H1 (cell line): ENCODE measurements at regions of chr1 and their contacts with region 1.

Region 1: DNA sequence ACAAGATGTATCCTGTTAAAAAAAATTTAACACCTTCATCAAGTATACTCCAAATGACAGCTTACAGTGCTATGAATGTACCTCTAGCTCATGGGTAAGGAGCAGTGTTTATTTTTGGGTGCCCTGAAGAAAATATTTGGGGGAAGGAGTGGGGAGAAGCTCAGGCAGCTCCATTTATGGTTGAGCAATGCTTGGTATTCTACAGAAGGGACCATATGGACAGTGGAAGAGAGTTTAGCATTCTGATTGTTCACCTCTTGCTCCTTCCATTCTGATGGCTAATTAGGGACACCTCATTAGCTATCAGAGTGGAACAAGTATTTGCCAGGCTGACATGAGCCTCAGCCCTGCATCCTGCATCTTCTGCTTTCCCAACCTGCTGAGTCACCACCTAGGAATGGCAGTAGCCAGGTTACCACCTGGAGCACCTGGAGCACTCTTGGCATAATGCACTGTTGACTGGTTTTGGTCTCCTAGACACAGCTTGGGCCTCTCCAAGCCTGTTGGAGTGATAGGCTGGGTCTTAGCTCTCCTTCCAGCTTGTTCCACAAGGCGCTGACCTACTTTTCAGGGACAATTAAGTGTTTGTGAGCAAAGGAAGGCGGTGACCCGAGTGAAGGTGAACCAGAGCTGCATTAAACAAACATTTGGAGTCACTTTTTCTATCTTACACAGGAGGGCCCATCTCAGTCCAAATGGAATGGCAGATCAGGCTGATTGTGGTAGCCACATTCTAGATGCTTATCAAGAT is 61.9 kb upstream of the MACF1 start:
- DNase-seq: no peak
- H3K4me3 ChIP-seq: peak overlapping the region in 1 of 4 experiments; percentile 18; a peak in 1 of 8 replicates
- H3K27ac ChIP-seq: peak overlapping the region; percentile 71
- H3K4me1 ChIP-seq: peaks cover 6 to 23% (median 15%) of the 10 kb centered on the region in 4 experiments; a peak in 6 of 7 replicates
- H3K27me3 ChIP-seq: no peaks in the 10 kb centered on the region
- CTCF ChIP-seq: no peak
- EP300 ChIP-seq: no peak
- POLR2A ChIP-seq: peak in 1 of 2 experiments; percentile 48; a peak in 1 of 3 replicates
- RAD21 ChIP-seq: no peak

Region 2: DNA sequence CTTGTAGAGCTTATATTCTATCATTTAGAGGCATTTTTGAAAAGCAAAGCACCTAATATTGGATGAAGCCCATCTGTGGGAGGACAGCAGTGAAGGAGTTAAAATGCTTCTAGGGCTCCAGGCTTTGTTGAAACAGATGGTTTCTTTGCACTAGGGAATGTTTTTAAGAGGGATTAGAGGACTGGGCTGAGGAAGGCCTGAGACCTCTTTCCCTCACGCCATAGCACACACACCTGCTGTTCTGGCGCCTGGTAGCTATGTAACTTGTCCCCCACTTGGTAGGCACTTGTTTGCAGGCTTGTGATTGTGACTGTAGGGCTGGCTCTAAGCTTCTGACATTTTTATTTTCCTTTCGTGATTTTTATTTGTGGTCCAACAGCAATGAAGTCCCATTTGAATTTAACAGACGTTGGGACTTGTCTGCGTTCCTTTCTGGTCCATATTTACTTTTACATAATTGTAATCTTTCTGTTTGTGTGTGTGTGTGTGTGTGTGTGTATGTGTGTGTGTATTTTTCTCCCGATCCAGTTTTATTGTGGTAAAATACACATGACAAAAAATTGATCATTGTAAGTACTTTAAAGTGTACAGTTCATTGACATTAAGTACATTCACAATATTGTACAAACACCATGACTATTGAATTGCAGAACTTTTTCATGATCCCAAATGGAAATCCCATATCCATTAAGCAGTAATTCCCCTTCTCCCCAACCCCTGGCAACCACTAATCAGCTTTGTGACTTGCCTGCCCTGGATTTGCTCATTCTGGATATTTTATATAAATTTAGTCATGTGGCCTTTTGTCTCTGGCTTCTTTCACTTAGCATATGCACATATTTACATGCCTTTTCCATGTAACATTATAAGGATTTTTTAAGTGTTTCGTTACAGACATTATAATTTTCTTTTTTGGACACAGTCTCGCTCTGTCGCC is 28.4 kb after region 1 on chr1:
- CTCF ChIA-PET with region 1: interaction called, 5 read pairs
- POLR2A ChIA-PET with region 1: interaction called, 10 read pairs
- DNase-seq: no peak
- H3K4me3 ChIP-seq: no peak overlapping the region
- H3K27ac ChIP-seq: peak overlapping the region; percentile 8; the same call in 1 of the 2 replicates
- H3K4me1 ChIP-seq: peaks cover 3 to 21% (median 16%) of the 10 kb centered on the region in 4 experiments; a peak in 6 of 7 replicates
- H3K27me3 ChIP-seq: no peaks in the 10 kb centered on the region
- CTCF ChIP-seq: no peak
- EP300 ChIP-seq: peak in 1 of 2 experiments; percentile 64; a peak in 1 of 3 replicates
- POLR2A ChIP-seq: peak in 1 of 2 experiments; percentile 34; a peak in 1 of 3 replicates
- RAD21 ChIP-seq: peak in 1 of 2 experiments; percentile 18; a peak in 1 of 4 replicates